Activated naive CD4-positive, alpha-beta T cell treated with anti-CD3 and anti-CD28 coated beads for 36 hours (primary cell): ENCODE measurements at regions of chr1 and their contacts with region 1.

Region 1: GRCh38 chr1:112508278-112509004 is at the start of gene WNT2B:
- DNase-seq: peak; percentile 77
- H3K4me3 Mint-ChIP-seq: peak within 1 kb of the TSS; percentile 73
- H3K27ac Mint-ChIP-seq: no peak within 1 kb of the TSS
- H3K4me1 Mint-ChIP-seq: no peaks in the 10 kb centered on the region
- H3K27me3 Mint-ChIP-seq: peaks cover 25% of the 10 kb centered on the region
- total RNA-seq, gene WNT2B: 0.12 TPM in 1 of 2 experiments, not detected in the other

Region 2: DNA sequence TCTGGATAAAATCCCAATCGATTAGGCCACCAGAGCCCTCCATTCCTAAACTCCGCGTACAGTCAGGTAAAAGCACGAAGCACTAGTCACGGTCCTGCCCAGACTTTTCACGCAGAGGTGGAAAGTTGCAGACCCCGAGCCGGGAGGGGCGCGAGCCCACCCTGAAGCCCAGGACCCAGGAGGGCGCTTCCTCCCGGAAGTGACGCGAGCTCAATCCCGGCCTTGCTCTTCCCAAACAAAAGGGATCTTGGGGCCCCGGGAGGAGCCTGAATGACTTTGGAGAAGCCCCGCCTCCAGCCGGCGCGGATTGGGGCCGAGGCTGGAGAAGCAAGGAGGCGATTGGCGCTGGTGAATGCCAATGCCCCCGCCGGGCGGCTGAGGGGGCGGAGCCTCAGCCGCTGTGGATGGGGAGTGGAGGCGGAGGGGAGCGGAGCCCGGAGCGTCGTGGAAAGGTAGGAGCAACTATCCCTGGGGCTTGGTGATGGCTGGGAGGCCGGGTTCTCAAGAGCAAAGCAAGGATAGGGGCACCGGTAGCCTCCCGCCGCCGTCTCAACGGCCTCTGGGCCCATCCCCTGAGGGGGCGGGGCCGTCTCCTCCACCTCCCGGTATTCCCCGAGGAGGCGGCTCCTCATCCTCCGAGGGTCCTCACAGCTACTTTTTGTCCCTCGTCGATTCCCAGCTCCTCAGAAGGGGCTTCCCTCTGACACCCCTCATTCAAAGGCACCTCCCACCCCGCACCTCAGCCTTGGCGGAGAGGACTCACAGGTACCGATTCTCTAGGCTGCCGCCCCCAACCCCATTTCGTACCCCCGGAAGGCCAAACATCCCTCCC is 112.4 kb before region 1 on chr1 and contains the start of gene CTTNBP2NL:
- CTCF ChIA-PET with region 1: interaction called, 6 read pairs
- intact Hi-C with region 1: loop called (anchors 2 kb)
- DNase-seq: peak; percentile 84
- H3K4me3 Mint-ChIP-seq: peak within 1 kb of the TSS; percentile 90
- H3K27ac Mint-ChIP-seq: no peak within 1 kb of the TSS
- H3K4me1 Mint-ChIP-seq: peaks cover 23% of the 10 kb centered on the region
- H3K27me3 Mint-ChIP-seq: peaks cover 9% of the 10 kb centered on the region
- total RNA-seq, gene CTTNBP2NL: 1.0 to 1.4 TPM

Region 3: GRCh38 chr1:112803906-112804762 is 295.7 kb after region 1 on chr1:
- CTCF ChIA-PET with region 1: no interaction called
- intact Hi-C with region 1: loop called (anchors 5 kb)
- DNase-seq: peak; percentile 81
- H3K4me3 Mint-ChIP-seq: no peak overlapping the region
- H3K27ac Mint-ChIP-seq: no peak overlapping the region
- H3K4me1 Mint-ChIP-seq: no peaks in the 10 kb centered on the region
- H3K27me3 Mint-ChIP-seq: no peaks in the 10 kb centered on the region